WTC11 (cell line): ENCODE measurements at regions of chr1 and their contacts with region 1.

Region 1: GRCh38 chr1:27662707-27663393 is 9.1 kb downstream of the IFI6 start:
- DNase-seq: peak; percentile 95
- ATAC-seq: peak; percentile 81
- H3K4me3 Mint-ChIP-seq: no peak overlapping the region
- H3K27ac Mint-ChIP-seq: peak overlapping the region; percentile 75
- H3K4me1 Mint-ChIP-seq: peaks cover 29% of the 10 kb centered on the region
- H3K27me3 Mint-ChIP-seq: peaks cover 3% of the 10 kb centered on the region; the same call in 1 of the 2 replicates
- CTCF ChIP-seq: peak; percentile 91

Region 2: GRCh38 chr1:27416387-27417111 is 246.3 kb before region 1 on chr1:
- CTCF ChIA-PET with region 1: interaction called, 11 read pairs
- POLR2A ChIA-PET with region 1: no interaction called
- DNase-seq: no peak
- ATAC-seq: peak; percentile 67
- H3K4me3 Mint-ChIP-seq: no peak overlapping the region
- H3K27ac Mint-ChIP-seq: peak overlapping the region; percentile 50; the same call in 1 of the 2 replicates
- H3K4me1 Mint-ChIP-seq: peaks cover 41% of the 10 kb centered on the region
- H3K27me3 Mint-ChIP-seq: no peaks in the 10 kb centered on the region
- CTCF ChIP-seq: 0 out of 2 replicates have a peak, but pooled peaks have one; percentile 1

Region 3: DNA sequence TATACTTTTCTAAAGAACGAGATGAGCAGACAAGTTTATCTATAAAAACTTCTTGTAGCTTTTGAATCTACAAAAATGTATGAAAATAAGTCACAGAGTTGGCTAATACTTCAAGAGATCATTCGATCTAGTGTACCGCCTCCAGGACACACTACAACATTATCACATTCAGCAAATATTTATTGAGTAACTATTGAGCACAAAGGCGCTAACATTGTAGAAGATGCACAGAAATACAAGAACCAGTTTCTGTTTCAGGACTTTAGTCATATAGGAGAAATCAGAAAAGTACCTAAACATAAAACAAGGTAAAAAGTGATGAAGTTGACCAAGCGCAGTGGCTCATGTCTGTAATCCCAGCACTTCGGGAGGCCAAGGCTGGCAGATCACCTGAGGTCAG is 193.5 kb before region 1 on chr1:
- CTCF ChIA-PET with region 1: no interaction called
- POLR2A ChIA-PET with region 1: no interaction called
- DNase-seq: no peak
- ATAC-seq: no peak
- H3K4me3 Mint-ChIP-seq: no peak overlapping the region
- H3K27ac Mint-ChIP-seq: no peak overlapping the region
- H3K4me1 Mint-ChIP-seq: peaks cover 37% of the 10 kb centered on the region
- H3K27me3 Mint-ChIP-seq: no peaks in the 10 kb centered on the region
- CTCF ChIP-seq: no peak

Region 4: GRCh38 chr1:27574871-27575831 is 87.7 kb before region 1 on chr1:
- CTCF ChIA-PET with region 1: interaction called, 11 read pairs
- POLR2A ChIA-PET with region 1: no interaction called
- DNase-seq: peak; percentile 86
- ATAC-seq: peak; percentile 33
- H3K4me3 Mint-ChIP-seq: peak overlapping the region; percentile 63
- H3K27ac Mint-ChIP-seq: peak overlapping the region; percentile 71; the same call in 1 of the 2 replicates
- H3K4me1 Mint-ChIP-seq: peaks cover 56% of the 10 kb centered on the region
- H3K27me3 Mint-ChIP-seq: no peaks in the 10 kb centered on the region
- CTCF ChIP-seq: peak; percentile 28; the same call in 1 of the 2 replicates

Region 5: DNA sequence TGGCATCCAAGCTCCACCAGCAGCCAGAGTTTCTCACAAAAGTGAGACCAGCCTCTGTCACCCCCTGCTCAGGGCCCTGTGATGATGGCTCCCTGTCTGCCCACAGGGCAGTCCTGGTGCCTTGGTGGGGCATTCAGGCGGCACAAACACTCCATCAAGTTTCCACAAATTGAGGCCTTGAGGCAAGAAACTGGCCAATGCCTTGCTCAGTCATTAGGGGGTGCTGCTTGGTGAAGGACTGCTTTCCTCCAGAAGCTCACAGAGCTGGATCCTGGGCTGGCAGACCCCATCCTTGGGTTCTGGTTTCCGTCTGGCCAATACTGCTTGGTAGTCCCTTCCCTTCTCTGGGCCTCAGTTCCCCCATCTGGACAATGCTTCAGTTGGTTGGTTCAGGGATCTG is 46.4 kb before region 1 on chr1:
- CTCF ChIA-PET with region 1: interaction called, 367 read pairs
- POLR2A ChIA-PET with region 1: interaction called, 11 read pairs
- DNase-seq: no peak
- ATAC-seq: peak; percentile 6; the same call in 1 of the 2 replicates
- H3K4me3 Mint-ChIP-seq: peak overlapping the region; percentile 48
- H3K27ac Mint-ChIP-seq: no peak overlapping the region
- H3K4me1 Mint-ChIP-seq: peaks cover 15% of the 10 kb centered on the region
- H3K27me3 Mint-ChIP-seq: peaks cover 15% of the 10 kb centered on the region
- CTCF ChIP-seq: no peak

Region 6: GRCh38 chr1:27643701-27644625 is 18.9 kb before region 1 on chr1:
- CTCF ChIA-PET with region 1: interaction called, 36 read pairs
- POLR2A ChIA-PET with region 1: interaction called, 3 read pairs
- DNase-seq: peak; percentile 75
- ATAC-seq: peak; percentile 96
- H3K4me3 Mint-ChIP-seq: no peak overlapping the region
- H3K27ac Mint-ChIP-seq: no peak overlapping the region
- H3K4me1 Mint-ChIP-seq: peaks cover 6% of the 10 kb centered on the region
- H3K27me3 Mint-ChIP-seq: no peaks in the 10 kb centered on the region
- CTCF ChIP-seq: peak; percentile 79

Region 7: DNA sequence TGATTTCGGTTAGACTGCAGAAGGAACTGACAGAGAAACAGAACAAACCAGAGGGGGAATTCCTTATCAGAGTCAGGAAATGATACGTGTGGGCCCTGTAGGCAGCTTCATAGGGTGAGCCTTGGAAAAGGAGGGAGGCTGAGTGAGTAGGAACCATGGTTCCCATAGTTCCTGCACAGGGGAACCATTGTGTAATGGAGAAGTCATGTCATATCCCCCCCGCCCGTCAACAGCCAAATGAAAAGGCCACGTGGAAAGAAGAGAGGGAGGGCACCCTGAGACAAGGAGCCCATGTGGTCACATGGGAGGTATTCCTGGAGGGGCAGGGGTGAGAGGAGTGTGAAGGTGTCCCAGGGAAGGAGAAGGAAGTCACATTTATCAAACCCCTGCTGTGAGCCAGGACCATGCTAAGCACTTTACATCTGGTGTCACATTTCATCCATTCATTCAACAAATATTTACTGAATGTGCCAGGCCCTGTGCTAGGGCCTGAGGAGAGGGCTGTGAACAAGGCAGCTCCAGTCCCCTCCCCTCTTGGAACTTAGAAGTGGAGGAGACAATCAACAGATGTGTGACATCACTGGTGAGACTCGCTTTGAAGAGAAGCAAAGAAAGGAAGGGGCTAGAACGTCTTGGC is 12.2 kb before region 1 on chr1:
- CTCF ChIA-PET with region 1: interaction called, 16 read pairs
- POLR2A ChIA-PET with region 1: no interaction called
- DNase-seq: no peak
- ATAC-seq: peak; percentile 79
- H3K4me3 Mint-ChIP-seq: no peak overlapping the region; the same call in 1 of the 2 replicates
- H3K27ac Mint-ChIP-seq: peak overlapping the region; percentile 43
- H3K4me1 Mint-ChIP-seq: peaks cover 26% of the 10 kb centered on the region
- H3K27me3 Mint-ChIP-seq: no peaks in the 10 kb centered on the region
- CTCF ChIP-seq: no peak

Region 8: GRCh38 chr1:27755286-27755685 is 92.4 kb after region 1 on chr1:
- CTCF ChIA-PET with region 1: no interaction called
- POLR2A ChIA-PET with region 1: no interaction called
- DNase-seq: no peak
- ATAC-seq: no peak
- H3K4me3 Mint-ChIP-seq: no peak overlapping the region
- H3K27ac Mint-ChIP-seq: no peak overlapping the region
- H3K4me1 Mint-ChIP-seq: no peaks in the 10 kb centered on the region
- H3K27me3 Mint-ChIP-seq: no peaks in the 10 kb centered on the region
- CTCF ChIP-seq: no peak